ENCODE measurements at regions of chr1 and their contacts with region 1.

Region 1: DNA sequence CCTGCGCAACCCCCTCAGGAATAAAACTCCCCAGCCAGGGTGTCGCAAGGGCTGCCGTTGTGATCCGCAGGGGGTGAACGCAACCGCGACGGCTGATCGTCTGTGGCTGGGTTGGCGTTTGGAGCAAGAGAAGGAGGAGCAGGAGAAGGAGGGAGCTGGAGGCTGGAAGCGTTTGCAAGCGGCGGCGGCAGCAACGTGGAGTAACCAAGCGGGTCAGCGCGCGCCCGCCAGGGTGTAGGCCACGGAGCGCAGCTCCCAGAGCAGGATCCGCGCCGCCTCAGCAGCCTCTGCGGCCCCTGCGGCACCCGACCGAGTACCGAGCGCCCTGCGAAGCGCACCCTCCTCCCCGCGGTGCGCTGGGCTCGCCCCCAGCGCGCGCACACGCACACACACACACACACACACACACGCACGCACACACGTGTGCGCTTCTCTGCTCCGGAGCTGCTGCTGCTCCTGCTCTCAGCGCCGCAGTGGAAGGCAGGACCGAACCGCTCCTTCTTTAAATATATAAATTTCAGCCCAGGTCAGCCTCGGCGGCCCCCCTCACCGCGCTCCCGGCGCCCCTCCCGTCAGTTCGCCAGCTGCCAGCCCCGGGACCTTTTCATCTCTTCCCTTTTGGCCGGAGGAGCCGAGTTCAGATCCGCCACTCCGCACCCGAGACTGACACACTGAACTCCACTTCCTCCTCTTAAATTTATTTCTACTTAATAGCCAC is 696 bp downstream of the TGFB2 start:
- DNase-seq: peak in 40 of 42 donors; percentile 30 to 85 (median 61)

Region 2: GRCh38 chr1:218521375-218522169 is 175.7 kb after region 1 on chr1:
- intact Hi-C with region 1: loop called (anchors 5 kb)
- DNase-seq: peak in 33 of 42 donors; percentile 6 to 82 (median 41)

Region 3: DNA sequence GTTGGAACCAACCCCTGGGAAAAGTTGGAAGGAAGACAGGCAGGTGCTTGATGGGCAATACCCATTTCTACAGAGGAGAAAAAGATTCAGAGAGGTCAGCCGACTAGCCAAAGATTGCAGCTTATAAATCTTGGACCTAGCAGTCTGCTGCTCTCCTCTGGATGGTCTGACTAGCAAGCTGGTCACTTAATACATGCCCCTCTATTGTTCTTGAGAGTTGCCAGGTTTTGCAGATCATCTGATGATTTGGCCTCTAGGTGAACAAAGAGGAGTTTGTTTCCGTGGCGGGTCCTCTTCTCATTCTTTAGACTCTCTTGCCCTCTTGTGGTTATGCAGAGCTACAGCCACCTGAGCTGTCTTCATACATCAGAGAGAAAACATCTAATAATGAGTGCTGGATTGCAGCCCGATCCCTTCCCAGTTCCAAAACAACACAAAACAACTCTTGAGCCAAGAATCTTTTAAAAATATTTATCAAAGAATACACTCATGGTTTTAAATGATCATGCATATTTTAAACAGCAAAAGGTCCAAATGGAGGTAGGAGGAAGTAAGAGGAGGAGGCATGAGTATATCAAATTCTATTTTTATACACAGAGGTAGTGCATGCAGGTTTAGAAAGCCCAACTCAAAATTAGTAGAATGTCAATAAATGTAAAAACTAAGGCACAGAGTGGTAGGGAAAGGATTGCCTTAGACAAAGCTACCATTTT is 1466.8 kb after region 1 on chr1:
- intact Hi-C with region 1: loop called (anchors 10 kb)
- DNase-seq: peak in 40 of 42 donors; percentile 11 to 86 (median 62)

Measured in head of caudate nucleus (tissue), 42 donors.